Heart left ventricle (tissue), 16 donors: ENCODE measurements at regions of chr15 and their contacts with region 1.

Region 1: DNA sequence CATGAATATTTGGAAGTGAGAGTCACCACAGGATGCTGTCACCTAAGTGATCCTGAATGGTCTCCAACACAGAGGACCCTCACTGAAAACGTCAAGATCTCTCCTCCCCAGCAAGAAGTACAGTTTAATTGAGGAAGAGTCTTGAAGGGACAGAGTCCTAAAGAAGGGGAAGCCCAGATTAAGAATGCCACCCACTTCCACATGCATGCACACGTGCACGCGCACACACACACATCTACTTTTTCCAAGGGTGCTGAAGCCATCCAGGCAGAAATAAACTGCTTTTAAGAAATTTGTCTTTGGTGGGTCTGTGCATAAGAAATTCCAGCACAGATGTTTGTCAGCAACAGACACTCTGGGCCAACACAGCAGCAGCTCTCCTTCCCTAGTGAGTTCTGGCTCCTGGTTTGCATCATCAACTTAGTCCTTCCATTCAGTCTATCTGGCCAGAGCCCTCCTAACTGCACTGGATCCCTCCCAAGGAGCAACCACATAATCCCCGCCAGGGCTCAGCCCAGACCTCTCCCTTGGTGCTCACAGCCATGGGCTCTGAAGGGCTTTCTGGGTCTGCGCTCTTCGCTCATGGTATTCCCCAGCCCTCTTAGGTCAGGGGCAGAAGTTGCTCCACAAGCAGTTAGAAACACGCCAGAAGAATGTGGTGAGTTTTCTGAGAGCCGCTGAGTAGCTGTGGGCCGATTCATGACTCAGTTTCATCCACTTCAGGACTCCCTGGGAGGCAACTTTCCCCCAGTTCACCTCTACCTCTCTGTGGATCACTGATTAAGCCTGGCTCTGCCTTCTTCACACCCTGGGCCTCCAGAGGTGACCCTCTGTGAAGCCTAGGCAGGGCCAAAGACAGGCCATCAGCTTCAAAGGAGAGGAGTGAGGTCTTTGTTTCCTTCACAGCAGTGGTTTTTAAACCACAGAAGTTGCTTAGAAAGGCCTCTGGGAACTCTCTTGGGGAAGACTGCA is 132.6 kb upstream of the LIPC start:
- DNase-seq: peak in 1 of 5 donors; percentile 44
- ATAC-seq: peak in 2 of 4 donors; percentile 34 to 55
- H3K4me3 ChIP-seq: no peak overlapping the region
- H3K27ac ChIP-seq: no peak overlapping the region
- H3K4me1 ChIP-seq: peaks cover 0 to 8% (median 0%) of the 10 kb centered on the region in 12 donors
- H3K27me3 ChIP-seq: no peaks in the 10 kb centered on the region
- CTCF ChIP-seq: no peak
- POLR2A ChIP-seq: no peak

Region 2: DNA sequence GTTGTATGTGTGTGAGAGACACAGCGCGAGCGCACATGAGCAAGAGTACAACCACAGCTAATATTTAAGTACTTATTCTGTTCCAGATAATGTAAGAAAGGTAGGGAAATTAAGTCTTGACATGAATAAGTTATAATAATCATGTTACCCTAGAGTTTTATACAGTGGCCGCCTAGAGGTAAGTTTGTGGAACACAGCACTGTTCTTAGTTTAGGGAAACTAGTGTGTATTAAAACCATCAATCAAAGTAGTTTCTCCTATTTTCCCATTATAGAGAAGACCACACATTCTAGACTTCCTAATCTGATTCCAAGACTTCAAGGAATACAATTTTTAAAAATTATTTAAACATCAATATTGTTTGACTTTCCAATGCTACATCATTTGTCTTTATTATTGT is 243.2 kb before region 1 on chr15:
- intact Hi-C with region 1: no loop called
- DNase-seq: no peak
- ATAC-seq: no peak
- H3K4me3 ChIP-seq: no peak overlapping the region
- H3K27ac ChIP-seq: no peak overlapping the region
- H3K4me1 ChIP-seq: peaks cover 0 to 4% (median 0%) of the 10 kb centered on the region in 12 donors
- H3K27me3 ChIP-seq: peaks cover 0 to 11% (median 0%) of the 10 kb centered on the region in 9 donors
- CTCF ChIP-seq: no peak
- POLR2A ChIP-seq: no peak

Region 3: DNA sequence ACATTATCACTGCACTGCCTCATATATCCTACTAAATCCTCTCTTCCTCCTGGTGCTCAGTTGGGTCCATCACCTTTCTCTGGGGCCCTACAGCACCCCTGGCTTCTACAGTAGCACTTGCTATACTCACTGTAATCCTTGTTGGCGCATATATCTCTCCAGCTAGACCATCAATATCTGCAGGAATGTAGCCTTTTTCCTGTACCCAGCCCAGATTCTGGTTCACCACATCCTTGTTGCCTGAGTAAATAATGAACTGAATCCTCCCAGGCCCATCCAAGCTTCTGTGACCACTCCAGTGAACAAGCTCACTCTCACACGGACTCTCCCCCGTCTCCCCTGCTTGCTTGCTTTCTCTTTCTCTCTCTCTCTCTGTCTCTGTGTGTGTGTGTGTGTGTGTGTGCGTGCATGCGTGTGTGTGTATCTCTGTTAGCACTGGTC is 70.1 kb after region 1 on chr15:
- intact Hi-C with region 1: loop called in 1 of 10 experiments (anchors 10 kb)
- DNase-seq: no peak
- ATAC-seq: no peak
- H3K4me3 ChIP-seq: no peak overlapping the region
- H3K27ac ChIP-seq: no peak overlapping the region
- H3K4me1 ChIP-seq: peaks cover 0 to 5% (median 0%) of the 10 kb centered on the region in 12 donors
- H3K27me3 ChIP-seq: no peaks in the 10 kb centered on the region
- CTCF ChIP-seq: no peak
- POLR2A ChIP-seq: no peak